ENCODE measurements at regions of chr7 and their contacts with region 1.

Region 1: GRCh38 chr7:55132890-55133551 is 114.2 kb downstream of the EGFR start:
- DNase-seq: peak; percentile 98 to 100
- H3K4me3 ChIP-seq: peak overlapping the region; percentile 39
- H3K27ac ChIP-seq: peak overlapping the region; percentile 92
- H3K4me1 ChIP-seq: peaks cover 77% of the 10 kb centered on the region
- H3K27me3 ChIP-seq: no peaks in the 10 kb centered on the region
- CTCF ChIP-seq: no peak

Region 2: DNA sequence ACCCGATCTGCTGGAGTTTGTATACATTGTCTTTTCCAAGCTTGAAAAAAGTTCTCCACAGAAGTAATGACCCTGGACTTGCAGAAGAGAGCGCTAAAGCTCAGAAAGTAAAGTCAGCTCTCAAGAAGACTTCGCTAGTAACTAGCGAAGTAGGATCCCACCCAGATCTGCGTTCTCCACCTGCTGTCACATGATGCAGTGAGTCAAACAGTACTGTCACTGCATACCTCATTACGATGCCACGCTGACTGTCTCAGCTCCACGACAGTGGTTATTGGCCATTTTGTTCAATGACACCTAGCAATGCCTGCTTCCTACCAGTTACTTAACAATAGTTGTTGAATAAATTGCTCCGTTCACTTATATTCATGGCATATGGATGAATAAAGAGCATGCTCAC is 344.4 kb before region 1 on chr7:
- CTCF ChIA-PET with region 1: no interaction called
- POLR2A ChIA-PET with region 1: no interaction called
- intact Hi-C with region 1: loop called (anchors 1 kb)
- DNase-seq: peak; percentile 79 to 99
- H3K4me3 ChIP-seq: no peak overlapping the region
- H3K27ac ChIP-seq: peak overlapping the region; percentile 27
- H3K4me1 ChIP-seq: peaks cover 29% of the 10 kb centered on the region
- H3K27me3 ChIP-seq: no peaks in the 10 kb centered on the region
- CTCF ChIP-seq: peak; percentile 95

Region 3: GRCh38 chr7:54877683-54878082 is 255.3 kb before region 1 on chr7:
- CTCF ChIA-PET with region 1: no interaction called
- POLR2A ChIA-PET with region 1: no interaction called
- intact Hi-C with region 1: loop called (anchors 2 kb)
- DNase-seq: peak; percentile 35 to 73
- H3K4me3 ChIP-seq: no peak overlapping the region
- H3K27ac ChIP-seq: no peak overlapping the region
- H3K4me1 ChIP-seq: peaks cover 8% of the 10 kb centered on the region
- H3K27me3 ChIP-seq: no peaks in the 10 kb centered on the region
- CTCF ChIP-seq: peak; percentile 67

Region 4: DNA sequence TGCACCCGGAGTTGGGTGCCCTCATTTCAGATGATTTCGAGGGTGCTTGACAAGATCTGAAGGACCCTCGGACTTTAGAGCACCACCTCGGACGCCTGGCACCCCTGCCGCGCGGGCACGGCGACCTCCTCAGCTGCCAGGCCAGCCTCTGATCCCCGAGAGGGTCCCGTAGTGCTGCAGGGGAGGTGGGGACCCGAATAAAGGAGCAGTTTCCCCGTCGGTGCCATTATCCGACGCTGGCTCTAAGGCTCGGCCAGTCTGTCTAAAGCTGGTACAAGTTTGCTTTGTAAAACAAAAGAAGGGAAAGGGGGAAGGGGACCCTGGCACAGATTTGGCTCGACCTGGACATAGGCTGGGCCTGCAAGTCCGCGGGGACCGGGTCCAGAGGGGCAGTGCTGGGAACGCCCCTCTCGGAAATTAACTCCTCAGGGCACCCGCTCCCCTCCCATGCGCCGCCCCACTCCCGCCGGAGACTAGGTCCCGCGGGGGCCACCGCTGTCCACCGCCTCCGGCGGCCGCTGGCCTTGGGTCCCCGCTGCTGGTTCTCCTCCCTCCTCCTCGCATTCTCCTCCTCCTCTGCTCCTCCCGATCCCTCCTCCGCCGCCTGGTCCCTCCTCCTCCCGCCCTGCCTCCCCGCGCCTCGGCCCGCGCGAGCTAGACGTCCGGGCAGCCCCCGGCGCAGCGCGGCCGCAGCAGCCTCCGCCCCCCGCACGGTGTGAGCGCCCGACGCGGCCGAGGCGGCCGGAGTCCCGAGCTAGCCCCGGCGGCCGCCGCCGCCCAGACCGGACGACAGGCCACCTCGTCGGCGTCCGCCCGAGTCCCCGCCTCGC is 114.4 kb before region 1 on chr7 and contains the start of gene EGFR:
- CTCF ChIA-PET with region 1: no interaction called
- POLR2A ChIA-PET with region 1: interaction called, 8 read pairs
- intact Hi-C with region 1: loop called (anchors 1 kb)
- DNase-seq: peak; percentile 80 to 96
- H3K4me3 ChIP-seq: peak within 1 kb of the TSS; percentile 79
- H3K27ac ChIP-seq: peak within 1 kb of the TSS; percentile 68
- H3K4me1 ChIP-seq: peaks cover 37% of the 10 kb centered on the region
- H3K27me3 ChIP-seq: no peaks in the 10 kb centered on the region
- CTCF ChIP-seq: no peak
- total RNA-seq, gene EGFR: 324 and 342 TPM in 2 replicates

Region 5: GRCh38 chr7:55110661-55111361 is 22.2 kb before region 1 on chr7:
- CTCF ChIA-PET with region 1: interaction called, 9 read pairs
- POLR2A ChIA-PET with region 1: interaction called, 7 read pairs
- intact Hi-C with region 1: loop called (anchors 1 kb)
- DNase-seq: peak; percentile 68 to 71
- H3K4me3 ChIP-seq: no peak overlapping the region
- H3K27ac ChIP-seq: peak overlapping the region; percentile 2; the same call in 1 of the 2 replicates
- H3K4me1 ChIP-seq: peaks cover 50% of the 10 kb centered on the region
- H3K27me3 ChIP-seq: no peaks in the 10 kb centered on the region
- CTCF ChIP-seq: no peak

Region 6: GRCh38 chr7:55185941-55186609 is 53.1 kb after region 1 on chr7:
- CTCF ChIA-PET with region 1: no interaction called
- POLR2A ChIA-PET with region 1: interaction called, 4 read pairs
- intact Hi-C with region 1: loop called (anchors 1 kb)
- DNase-seq: peak; percentile 97 to 99
- H3K4me3 ChIP-seq: no peak overlapping the region
- H3K27ac ChIP-seq: peak overlapping the region; percentile 51
- H3K4me1 ChIP-seq: peaks cover 27% of the 10 kb centered on the region
- H3K27me3 ChIP-seq: no peaks in the 10 kb centered on the region
- CTCF ChIP-seq: no peak

Region 7: DNA sequence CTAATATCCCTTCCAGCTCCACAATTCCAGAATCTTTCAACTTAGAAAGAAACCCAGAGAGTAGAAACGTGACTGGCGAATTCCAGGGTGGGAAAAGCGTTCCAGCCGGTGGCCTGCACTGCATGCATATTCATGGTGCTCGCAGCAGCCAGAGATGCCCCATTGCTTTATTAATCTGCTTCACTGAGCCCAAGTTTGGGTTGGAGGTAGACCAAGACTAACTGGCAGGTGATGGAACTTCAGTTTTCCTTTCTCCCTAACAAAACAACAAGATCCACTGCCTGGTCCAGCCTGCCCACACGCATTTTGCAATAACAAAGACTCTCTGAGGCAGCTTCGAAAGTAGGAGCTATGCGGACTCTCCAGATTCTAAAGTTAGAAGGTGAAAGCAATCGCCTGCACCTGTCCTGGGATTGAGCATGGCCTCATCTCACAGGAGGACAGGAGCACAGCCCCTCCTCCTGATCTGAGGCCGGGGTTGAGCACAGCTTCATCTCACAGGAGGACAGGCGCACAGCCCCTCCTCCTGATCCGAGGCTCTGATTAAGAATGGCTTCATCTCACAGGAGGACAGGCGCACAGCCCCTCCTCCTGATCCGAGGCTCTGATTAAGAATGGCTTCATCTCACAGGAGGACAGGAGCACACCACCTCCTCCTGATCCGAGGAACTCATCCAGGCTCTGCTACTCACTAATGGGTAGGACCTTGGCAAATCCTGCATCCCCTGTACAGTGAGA is 104.3 kb after region 1 on chr7:
- CTCF ChIA-PET with region 1: no interaction called
- POLR2A ChIA-PET with region 1: no interaction called
- intact Hi-C with region 1: no loop called
- DNase-seq: no peak
- H3K4me3 ChIP-seq: no peak overlapping the region
- H3K27ac ChIP-seq: no peak overlapping the region
- H3K4me1 ChIP-seq: no peaks in the 10 kb centered on the region
- H3K27me3 ChIP-seq: peaks cover 75% of the 10 kb centered on the region
- CTCF ChIP-seq: no peak